Common myeloid progenitor, CD34-positive (primary cell): ENCODE measurements at regions of chr1 and their contacts with region 1.

Region 1: GRCh38 chr1:45994423-45994822 is 138.0 kb downstream of the PIK3R3 start:
- DNase-seq: no peak
- H3K4me3 ChIP-seq: no peak overlapping the region
- H3K27ac ChIP-seq: no peak overlapping the region
- H3K4me1 ChIP-seq: no peaks in the 10 kb centered on the region
- H3K27me3 ChIP-seq: no peaks in the 10 kb centered on the region

Region 2: GRCh38 chr1:45906883-45907282 is 87.5 kb before region 1 on chr1:
- CTCF ChIA-PET with region 1: no interaction called
- POLR2A ChIA-PET with region 1: no interaction called
- DNase-seq: no peak
- H3K4me3 ChIP-seq: no peak overlapping the region
- H3K27ac ChIP-seq: no peak overlapping the region
- H3K4me1 ChIP-seq: no peaks in the 10 kb centered on the region
- H3K27me3 ChIP-seq: no peaks in the 10 kb centered on the region

Region 3: DNA sequence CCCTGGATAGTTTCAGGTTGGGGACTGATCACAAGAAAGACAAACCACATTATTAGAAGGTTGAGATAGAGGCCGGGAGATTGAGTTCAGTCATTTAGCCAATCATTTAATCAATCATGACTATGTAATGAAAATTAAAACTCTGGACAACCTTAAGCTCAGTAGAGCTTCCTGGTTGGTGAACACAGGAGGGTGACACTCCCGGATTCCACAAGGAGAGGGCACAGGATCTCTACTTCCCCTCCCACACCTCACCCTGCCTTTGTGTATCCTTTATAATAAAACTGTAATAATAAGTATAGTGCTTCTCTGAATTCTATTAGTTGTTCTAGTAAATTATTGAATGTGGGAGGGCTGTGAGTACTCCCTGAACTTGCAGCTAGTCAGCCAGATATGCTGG is 12.1 kb before region 1 on chr1:
- CTCF ChIA-PET with region 1: no interaction called
- POLR2A ChIA-PET with region 1: interaction called, 11 read pairs
- DNase-seq: no peak
- H3K4me3 ChIP-seq: no peak overlapping the region
- H3K27ac ChIP-seq: no peak overlapping the region
- H3K4me1 ChIP-seq: no peaks in the 10 kb centered on the region
- H3K27me3 ChIP-seq: no peaks in the 10 kb centered on the region